ENCODE measurements at regions of chr6 and their contacts with region 1.

Region 1: GRCh38 chr6:55276745-55277530 is 50.3 kb upstream of the GFRAL start:
- DNase-seq: peak; percentile 37
- ATAC-seq: peak; percentile 83

Region 2: GRCh38 chr6:55953335-55953734 is 676.4 kb after region 1 on chr6:
- intact Hi-C with region 1: loop called (anchors 5 kb)
- DNase-seq: no peak
- ATAC-seq: peak; percentile 73

Region 3: GRCh38 chr6:56055081-56055704 is 778.3 kb after region 1 on chr6:
- intact Hi-C with region 1: no loop called
- DNase-seq: no peak
- ATAC-seq: no peak

Region 4: DNA sequence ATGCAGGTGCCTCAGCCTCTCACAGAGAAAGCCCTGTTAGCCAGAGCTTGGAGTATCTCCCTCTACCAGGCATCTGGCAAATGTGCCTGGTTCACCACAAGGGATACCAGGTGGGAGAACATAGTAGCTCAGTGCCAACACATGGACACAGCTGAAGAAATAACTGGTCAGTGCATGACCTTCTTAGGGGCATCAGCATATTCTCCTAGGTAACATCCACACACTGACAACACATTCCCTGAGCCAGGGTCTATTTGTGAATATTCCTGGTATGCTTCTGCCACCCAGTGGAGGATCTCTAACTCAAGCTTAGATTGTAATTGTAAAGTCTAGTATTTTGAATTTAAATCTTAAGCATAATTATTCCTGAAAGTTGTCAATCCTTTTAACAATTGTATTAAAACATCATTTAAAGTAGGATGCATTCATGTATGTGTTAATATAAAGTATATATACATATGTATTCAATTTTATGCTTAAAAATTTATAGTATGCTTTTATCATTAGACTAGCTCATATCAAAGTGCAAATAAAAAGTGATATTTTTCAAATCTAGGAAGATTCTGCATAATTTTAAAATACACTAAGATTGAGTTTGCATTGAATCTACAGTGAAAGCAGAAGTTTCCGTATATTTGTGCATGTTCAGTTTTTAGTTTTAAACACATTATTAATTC is 1015.7 kb after region 1 on chr6:
- intact Hi-C with region 1: loop called (anchors 10 kb)
- DNase-seq: no peak
- ATAC-seq: peak; percentile 89